Ascending aorta (tissue), 2 donors: ENCODE measurements at regions of chr1 and their contacts with region 1.

Region 1: GRCh38 chr1:67840449-67840848 is 7.2 kb upstream of the GNG12 start:
- DNase-seq: no peak
- H3K4me3 ChIP-seq: no peak overlapping the region
- H3K27ac ChIP-seq: peak overlapping the region; percentile 80 to 93
- H3K4me1 ChIP-seq: peaks cover 6 to 43% of the 10 kb centered on the region in 2 donors
- H3K27me3 ChIP-seq: no peaks in the 10 kb centered on the region
- CTCF ChIP-seq: no peak

Region 2: DNA sequence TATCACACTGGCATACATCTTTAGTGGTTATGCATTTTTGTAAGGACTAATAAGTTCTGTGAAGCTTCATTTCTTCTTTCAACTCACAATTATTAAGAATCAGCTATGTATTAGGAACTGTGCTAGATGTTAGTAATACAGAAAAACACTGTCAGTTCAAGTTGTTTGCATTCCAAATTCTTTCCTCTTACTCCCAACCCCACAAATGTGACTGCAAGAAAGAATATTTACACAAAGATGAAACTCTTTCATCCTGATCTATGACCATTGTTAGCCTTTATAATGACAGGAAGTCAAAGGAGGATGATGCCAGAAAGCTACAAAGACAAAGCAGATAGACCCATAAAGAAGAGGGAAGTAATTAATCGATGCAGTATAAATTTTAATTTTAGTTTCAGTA is 176.4 kb before region 1 on chr1:
- intact Hi-C with region 1: no loop called
- DNase-seq: no peak
- H3K4me3 ChIP-seq: no peak overlapping the region
- H3K27ac ChIP-seq: no peak overlapping the region
- H3K4me1 ChIP-seq: no peaks in the 10 kb centered on the region
- H3K27me3 ChIP-seq: no peaks in the 10 kb centered on the region
- CTCF ChIP-seq: no peak

Region 3: GRCh38 chr1:68111519-68112436 is 271.3 kb after region 1 on chr1:
- intact Hi-C with region 1: loop called (anchors 2 kb)
- DNase-seq: peak in 1 of 2 donors; percentile 76
- H3K4me3 ChIP-seq: no peak overlapping the region
- H3K27ac ChIP-seq: peak overlapping the region in 1 of 2 donors; percentile 12
- H3K4me1 ChIP-seq: peaks cover 0 to 12% of the 10 kb centered on the region in 2 donors
- H3K27me3 ChIP-seq: no peaks in the 10 kb centered on the region
- CTCF ChIP-seq: peak; percentile 46 to 60 (median 51)